ENCODE measurements at regions of chr4 and their contacts with region 1.

Region 1: GRCh38 chr4:111854494-111855087 is 290.7 kb upstream of the FAM241A start:
- DNase-seq: peak; percentile 48
- H3K4me3 Mint-ChIP-seq: no peak overlapping the region
- H3K27ac Mint-ChIP-seq: no peak overlapping the region
- H3K4me1 Mint-ChIP-seq: peaks cover 11% of the 10 kb centered on the region
- H3K27me3 Mint-ChIP-seq: no peaks in the 10 kb centered on the region
- CTCF ChIP-seq: peak; percentile 27

Region 2: DNA sequence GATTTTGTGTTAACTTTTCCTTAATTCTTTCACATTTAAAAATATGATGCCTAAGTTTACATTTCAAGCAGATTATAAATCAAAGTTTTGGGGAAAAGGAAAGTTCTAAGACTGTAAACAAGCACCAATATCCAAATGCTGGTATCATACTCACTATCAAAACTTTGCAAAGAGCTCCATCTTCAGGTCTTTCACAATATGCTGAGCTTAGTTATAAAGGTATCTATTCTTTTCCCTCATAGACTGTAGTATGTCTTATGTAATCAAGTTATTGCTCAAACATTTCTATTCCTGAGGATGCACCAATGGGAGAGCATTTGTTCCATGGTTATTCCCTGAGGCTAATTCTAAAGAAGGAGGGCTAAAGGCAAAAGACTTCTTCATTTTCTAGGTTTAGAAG is 82.8 kb after region 1 on chr4:
- CTCF ChIA-PET with region 1: interaction called, 5 read pairs
- intact Hi-C with region 1: loop called (anchors 1 kb)
- DNase-seq: no peak
- H3K4me3 Mint-ChIP-seq: no peak overlapping the region
- H3K27ac Mint-ChIP-seq: no peak overlapping the region
- H3K4me1 Mint-ChIP-seq: no peaks in the 10 kb centered on the region
- H3K27me3 Mint-ChIP-seq: no peaks in the 10 kb centered on the region
- CTCF ChIP-seq: no peak

Region 3: DNA sequence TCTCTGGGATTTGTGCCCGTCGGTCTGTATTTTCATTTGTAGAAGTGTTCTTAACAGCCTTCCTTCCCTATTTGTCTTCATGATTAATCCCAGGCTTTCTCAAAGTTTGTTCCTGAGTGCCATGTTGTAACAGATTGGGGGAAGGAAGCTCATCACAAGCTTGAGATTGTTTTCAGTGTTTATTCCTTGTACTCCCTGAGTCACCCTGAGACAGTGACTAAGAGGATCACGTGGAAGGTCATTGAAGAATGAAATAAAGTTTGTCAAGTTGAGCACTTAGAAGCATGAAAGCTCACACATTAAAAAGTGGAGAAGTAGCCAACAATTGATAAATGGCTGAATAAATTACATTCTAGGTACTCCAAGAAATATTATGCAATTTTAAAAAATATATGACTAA is 137.2 kb after region 1 on chr4:
- CTCF ChIA-PET with region 1: no interaction called
- intact Hi-C with region 1: no loop called
- DNase-seq: peak; percentile 3
- H3K4me3 Mint-ChIP-seq: no peak overlapping the region
- H3K27ac Mint-ChIP-seq: peak overlapping the region; percentile 74
- H3K4me1 Mint-ChIP-seq: peaks cover 9% of the 10 kb centered on the region
- H3K27me3 Mint-ChIP-seq: no peaks in the 10 kb centered on the region
- CTCF ChIP-seq: no peak

Region 4: GRCh38 chr4:112031712-112032328 is 177.2 kb after region 1 on chr4:
- CTCF ChIA-PET with region 1: interaction called, 4 read pairs
- intact Hi-C with region 1: loop called (anchors 5 kb)
- DNase-seq: peak; percentile 37
- H3K4me3 Mint-ChIP-seq: no peak overlapping the region
- H3K27ac Mint-ChIP-seq: no peak overlapping the region
- H3K4me1 Mint-ChIP-seq: no peaks in the 10 kb centered on the region
- H3K27me3 Mint-ChIP-seq: no peaks in the 10 kb centered on the region
- CTCF ChIP-seq: peak; percentile 43

Measured in Calu3 (cell line).